Heart right ventricle (tissue), 16 donors: ENCODE measurements at regions of chr5 and their contacts with region 1.

Region 1: GRCh38 chr5:149544028-149544420 is 7.2 kb downstream of the CSNK1A1 start:
- DNase-seq: no peak
- ATAC-seq: no peak
- H3K4me3 ChIP-seq: peak overlapping the region in 1 of 10 donors; percentile 3
- H3K27ac ChIP-seq: peak overlapping the region in 8 of 10 donors; percentile 13 to 51 (median 40)
- H3K4me1 ChIP-seq: peaks cover 27 to 100% (median 95%) of the 10 kb centered on the region in 9 donors
- H3K27me3 ChIP-seq: no peaks in the 10 kb centered on the region
- CTCF ChIP-seq: no peak

Region 2: GRCh38 chr5:148887123-148887881 is 656.7 kb before region 1 on chr5:
- intact Hi-C with region 1: no loop called
- DNase-seq: no peak
- ATAC-seq: no peak
- H3K4me3 ChIP-seq: no peak overlapping the region
- H3K27ac ChIP-seq: no peak overlapping the region
- H3K4me1 ChIP-seq: no peaks in the 10 kb centered on the region
- H3K27me3 ChIP-seq: no peaks in the 10 kb centered on the region
- CTCF ChIP-seq: no peak

Region 3: DNA sequence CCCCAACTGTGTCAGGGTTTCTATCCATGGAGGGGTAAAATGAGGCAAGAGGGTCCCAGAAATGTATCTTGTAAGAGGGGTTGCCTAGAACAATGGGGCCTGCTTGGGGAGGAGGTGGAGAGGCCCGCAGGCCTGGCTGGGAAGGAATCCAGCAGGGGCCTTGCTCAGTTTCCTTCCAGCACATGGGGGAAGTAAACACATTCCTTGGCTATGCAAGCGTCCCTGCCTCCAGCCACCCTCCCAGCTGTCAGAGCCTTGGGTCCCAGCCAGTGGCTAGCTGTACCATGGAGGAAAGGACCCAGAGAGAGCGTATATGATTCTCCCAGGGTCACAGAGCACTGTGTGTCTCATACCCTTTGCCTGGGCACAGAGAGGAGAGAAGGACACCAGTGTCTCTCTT is 93.8 kb before region 1 on chr5:
- intact Hi-C with region 1: no loop called
- DNase-seq: peak; percentile 81 to 83
- ATAC-seq: peak; percentile 56 to 81 (median 72)
- H3K4me3 ChIP-seq: no peak overlapping the region
- H3K27ac ChIP-seq: peak overlapping the region; percentile 83 to 93 (median 88)
- H3K4me1 ChIP-seq: peaks cover 44 to 97% (median 80%) of the 10 kb centered on the region in 9 donors
- H3K27me3 ChIP-seq: no peaks in the 10 kb centered on the region
- CTCF ChIP-seq: no peak

Region 4: GRCh38 chr5:149504677-149505076 is 39.3 kb before region 1 on chr5:
- intact Hi-C with region 1: loop called in 1 of 10 experiments (anchors 5 kb)
- DNase-seq: no peak
- ATAC-seq: no peak
- H3K4me3 ChIP-seq: no peak overlapping the region
- H3K27ac ChIP-seq: peak overlapping the region in 1 of 10 donors; percentile 3
- H3K4me1 ChIP-seq: peaks cover 0 to 4% (median 0%) of the 10 kb centered on the region in 9 donors
- H3K27me3 ChIP-seq: no peaks in the 10 kb centered on the region
- CTCF ChIP-seq: no peak